PC-3 (cell line): ENCODE measurements at regions of chr10 and their contacts with region 1.

Region 1: GRCh38 chr10:25080880-25081581 is 64.6 kb downstream of the THNSL1 start:
- DNase-seq: peak; percentile 83
- ATAC-seq: peak; percentile 96
- H3K4me3 ChIP-seq: no peak overlapping the region
- H3K27ac ChIP-seq: no peak overlapping the region
- H3K4me1 ChIP-seq: 0 out of 2 replicates have a peak, but pooled peaks cover 3% of the 10 kb centered on the region
- H3K27me3 ChIP-seq: no peaks in the 10 kb centered on the region
- CTCF ChIP-seq: peak; percentile 86

Region 2: GRCh38 chr10:24784061-24784460 is 297.0 kb before region 1 on chr10:
- CTCF ChIA-PET with region 1: interaction called, 11 read pairs
- POLR2A ChIA-PET with region 1: no interaction called
- intact Hi-C with region 1: no loop called
- DNase-seq: no peak
- ATAC-seq: no peak
- H3K4me3 ChIP-seq: no peak overlapping the region
- H3K27ac ChIP-seq: no peak overlapping the region
- H3K4me1 ChIP-seq: no peaks in the 10 kb centered on the region
- H3K27me3 ChIP-seq: no peaks in the 10 kb centered on the region
- CTCF ChIP-seq: no peak

Region 3: DNA sequence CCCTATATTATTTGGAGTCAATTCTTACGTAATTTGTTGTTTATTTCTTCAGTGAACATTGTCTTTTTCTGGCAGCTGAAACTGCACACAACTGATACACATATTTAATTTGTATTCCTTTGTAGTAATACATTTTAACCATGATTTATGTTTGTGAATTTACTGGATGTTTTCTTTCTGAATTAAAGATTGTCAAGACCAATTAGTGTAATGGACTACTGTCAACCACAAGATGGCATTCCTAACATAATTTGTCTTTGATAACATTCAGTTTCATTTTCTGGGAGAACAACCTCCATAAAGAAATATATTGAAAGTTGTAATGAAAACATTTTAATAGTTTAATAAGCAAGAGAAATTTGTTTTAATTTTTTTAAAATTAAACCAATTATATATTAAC is 54.6 kb before region 1 on chr10:
- CTCF ChIA-PET with region 1: no interaction called
- POLR2A ChIA-PET with region 1: no interaction called
- intact Hi-C with region 1: loop called (anchors 1 kb)
- DNase-seq: peak; percentile 18
- ATAC-seq: no peak
- H3K4me3 ChIP-seq: no peak overlapping the region
- H3K27ac ChIP-seq: no peak overlapping the region
- H3K4me1 ChIP-seq: no peaks in the 10 kb centered on the region
- H3K27me3 ChIP-seq: no peaks in the 10 kb centered on the region
- CTCF ChIP-seq: peak; percentile 44; the same call in 1 of the 2 replicates